Gastrocnemius medialis (tissue), 4 donors: ENCODE measurements at regions of chr4 and their contacts with region 1.

Region 1: DNA sequence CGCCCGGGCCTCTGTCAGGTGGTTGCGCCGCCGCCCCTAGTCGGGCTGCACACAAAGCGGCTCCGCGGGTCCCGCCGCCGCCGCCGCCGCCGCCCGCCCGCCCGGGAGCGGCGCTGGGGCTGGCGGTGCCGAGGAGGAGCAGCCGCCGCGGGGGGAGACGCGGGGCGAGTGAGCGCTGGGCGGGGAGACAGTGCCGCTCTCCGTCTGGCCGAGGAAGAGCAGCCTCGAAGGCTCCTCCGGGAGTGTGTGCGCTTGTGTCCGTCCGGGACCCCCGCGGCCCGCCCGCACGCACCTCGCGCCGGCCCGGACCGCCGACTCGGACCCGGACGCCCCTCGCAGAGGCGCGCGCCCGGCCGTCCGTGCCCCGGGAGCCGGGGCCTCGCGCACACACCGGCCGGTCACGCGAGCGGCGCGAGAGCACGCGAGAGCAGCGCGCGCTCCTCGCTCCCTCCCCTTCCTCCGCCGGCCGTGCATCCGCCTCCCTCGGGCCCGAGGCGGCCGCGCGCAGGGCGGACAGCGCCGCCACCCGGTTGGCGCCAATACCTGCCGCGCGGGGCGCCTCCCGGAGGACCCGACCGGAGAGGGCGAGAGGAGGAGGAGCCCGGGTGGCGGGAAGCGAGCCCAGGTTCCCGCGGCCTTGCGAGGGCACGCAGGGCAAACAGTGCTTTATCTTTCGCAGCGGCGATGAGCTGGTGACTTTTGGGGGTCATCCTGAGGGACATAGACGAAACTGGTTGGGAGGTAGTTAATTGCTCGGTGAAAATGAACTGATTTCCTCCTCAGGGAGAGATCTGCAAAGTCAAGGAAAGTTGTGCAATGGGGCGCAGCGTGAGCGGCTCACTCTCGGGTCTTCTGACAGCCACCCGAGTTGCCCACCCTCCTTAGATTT is at the start of gene PDS5A:
- DNase-seq: peak; percentile 73 to 86
- ATAC-seq: peak; percentile 90 to 91
- H3K4me3 ChIP-seq: peak within 1 kb of the TSS; percentile 74 to 96 (median 94)
- H3K27ac ChIP-seq: peak within 1 kb of the TSS; percentile 95 to 99 (median 98)
- H3K4me1 ChIP-seq: peaks cover 10 to 11% of the 10 kb centered on the region in 2 donors
- H3K27me3 ChIP-seq: no peaks in the 10 kb centered on the region
- CTCF ChIP-seq: peak; percentile 69 to 97 (median 97)
- POLR2A ChIP-seq: peak; percentile 92 to 94
- total RNA-seq, gene PDS5A: 28.3 to 40.6 (median 36.7) TPM

Region 2: DNA sequence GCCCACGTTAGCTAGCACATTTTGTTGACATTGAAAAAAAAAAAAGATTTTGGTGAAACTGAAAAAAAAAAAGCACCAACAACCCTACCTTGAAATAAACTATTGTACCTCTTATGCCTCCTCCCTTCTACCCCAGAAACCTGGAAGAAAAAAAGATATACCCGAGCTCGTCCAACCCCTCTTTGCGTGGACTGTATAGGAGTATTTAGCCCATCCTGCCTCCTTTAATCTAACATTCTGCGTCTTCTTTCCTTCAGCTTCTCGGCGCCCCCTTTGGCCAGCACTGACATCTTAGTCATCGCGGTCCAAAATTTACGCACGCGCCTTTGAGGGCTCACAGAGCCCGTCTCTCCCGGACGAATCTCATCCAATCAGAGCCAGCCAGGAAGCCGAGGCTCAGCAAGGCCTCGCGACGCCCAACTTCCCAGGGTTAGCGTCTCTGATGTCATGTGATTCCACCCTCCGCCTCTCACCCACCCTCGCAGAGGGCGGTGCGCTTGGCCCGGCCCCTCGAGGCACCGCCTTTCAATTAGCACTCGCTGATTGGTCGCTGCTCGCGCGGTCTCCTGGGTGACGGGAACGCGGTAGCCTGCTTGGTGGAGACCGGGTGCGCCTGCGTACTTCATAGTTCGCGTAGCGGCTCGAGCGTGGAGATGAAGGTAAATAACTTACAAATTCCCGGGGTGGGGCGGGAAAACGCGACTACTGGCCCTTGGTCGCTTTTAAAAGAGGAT is 795.7 kb before region 1 on chr4 and contains the start of gene WDR19:
- in situ Hi-C with region 1: no loop called
- intact Hi-C with region 1: loop called (anchors 1 kb)
- DNase-seq: peak; percentile 99
- ATAC-seq: peak; percentile 99 to 100
- H3K4me3 ChIP-seq: peak within 1 kb of the TSS; percentile 70 to 94 (median 74)
- H3K27ac ChIP-seq: peak within 1 kb of the TSS; percentile 81 to 87 (median 83)
- H3K4me1 ChIP-seq: peaks cover 9 to 16% of the 10 kb centered on the region in 2 donors
- H3K27me3 ChIP-seq: no peaks in the 10 kb centered on the region
- CTCF ChIP-seq: peak in 3 of 5 experiments; percentile 12 to 58 (median 45)
- POLR2A ChIP-seq: peak; percentile 45 to 59
- total RNA-seq, gene WDR19: 6.1 to 16.2 (median 9.6) TPM

Region 3: DNA sequence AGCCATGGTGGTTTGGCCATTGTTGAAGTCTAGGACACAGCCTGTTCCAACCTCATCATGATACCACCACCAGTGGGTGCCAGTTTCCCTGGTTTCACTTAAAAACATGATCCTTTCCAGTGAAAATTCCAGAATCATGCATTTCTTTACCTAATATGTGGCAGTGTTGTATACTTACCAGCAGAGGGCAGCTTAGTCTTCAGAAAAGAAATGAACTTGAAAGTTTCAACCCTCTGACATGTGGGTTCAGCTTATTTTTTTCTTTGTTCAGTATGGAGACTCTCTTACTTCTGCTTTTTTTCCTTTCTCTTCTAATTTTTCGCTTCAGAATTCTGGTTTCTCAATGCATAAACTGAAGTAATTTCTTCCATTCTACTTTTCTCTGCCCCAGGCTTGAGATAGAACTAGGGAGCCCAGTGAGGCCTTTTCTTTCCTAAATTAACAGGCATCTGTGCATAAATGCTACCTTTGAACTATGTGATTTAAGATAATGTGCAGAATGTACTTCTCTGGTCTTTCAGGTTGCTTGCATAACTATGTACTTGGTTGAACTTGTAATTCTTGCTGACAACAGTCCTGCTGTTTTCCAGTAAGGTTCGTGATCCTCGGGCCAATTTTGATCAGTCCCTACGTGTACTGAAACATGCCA is 508.2 kb before region 1 on chr4:
- in situ Hi-C with region 1: loop called (anchors 5 to 10 kb)
- intact Hi-C with region 1: loop called (anchors 1 kb)
- DNase-seq: no peak
- ATAC-seq: peak; percentile 85
- H3K4me3 ChIP-seq: no peak overlapping the region
- H3K27ac ChIP-seq: peak overlapping the region in 3 of 4 donors; percentile 32 to 45 (median 35)
- H3K4me1 ChIP-seq: no peaks in the 10 kb centered on the region
- H3K27me3 ChIP-seq: no peaks in the 10 kb centered on the region
- CTCF ChIP-seq: peak; percentile 61 to 76 (median 68)
- POLR2A ChIP-seq: no peak

Region 4: GRCh38 chr4:39527273-39528060 is 450.3 kb before region 1 on chr4 and contains the start of gene UGDH:
- in situ Hi-C with region 1: no loop called
- intact Hi-C with region 1: loop called (anchors 1 kb)
- DNase-seq: peak; percentile 94 to 96
- ATAC-seq: peak; percentile 92 to 94
- H3K4me3 ChIP-seq: peak within 1 kb of the TSS; percentile 84 to 95 (median 91)
- H3K27ac ChIP-seq: peak within 1 kb of the TSS; percentile 91 to 98 (median 95)
- H3K4me1 ChIP-seq: peaks cover 24% of the 10 kb centered on the region in 2 donors
- H3K27me3 ChIP-seq: no peaks in the 10 kb centered on the region
- CTCF ChIP-seq: no peak
- POLR2A ChIP-seq: peak; percentile 88 to 89
- total RNA-seq, gene UGDH: 6.1 to 12.7 (median 8.8) TPM

Region 5: GRCh38 chr4:39883646-39884045 is 94.1 kb before region 1 on chr4:
- in situ Hi-C with region 1: no loop called
- intact Hi-C with region 1: no loop called
- DNase-seq: no peak
- ATAC-seq: no peak
- H3K4me3 ChIP-seq: no peak overlapping the region
- H3K27ac ChIP-seq: no peak overlapping the region
- H3K4me1 ChIP-seq: no peaks in the 10 kb centered on the region
- H3K27me3 ChIP-seq: no peaks in the 10 kb centered on the region
- CTCF ChIP-seq: no peak
- POLR2A ChIP-seq: no peak

Region 6: DNA sequence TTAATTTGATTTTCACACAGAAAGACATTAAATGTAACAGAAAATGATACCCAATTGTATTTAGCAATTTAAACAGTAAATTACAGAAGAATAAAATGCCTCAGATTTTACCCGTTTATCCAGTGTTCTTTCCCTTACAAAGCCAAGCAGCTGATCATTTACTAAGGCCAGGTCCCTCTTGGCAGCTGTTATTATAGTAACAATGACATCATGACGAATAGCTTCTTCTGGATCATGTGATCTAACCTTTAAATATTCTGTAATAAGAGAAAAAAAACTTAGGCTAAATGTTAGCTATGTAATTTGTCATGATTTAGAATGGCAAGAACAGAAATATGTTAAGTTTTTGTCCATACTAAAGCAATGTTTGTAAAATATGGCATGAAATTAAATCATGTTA is 69.4 kb before region 1 on chr4:
- in situ Hi-C with region 1: no loop called
- intact Hi-C with region 1: no loop called
- DNase-seq: no peak
- ATAC-seq: no peak
- H3K4me3 ChIP-seq: no peak overlapping the region
- H3K27ac ChIP-seq: no peak overlapping the region
- H3K4me1 ChIP-seq: no peaks in the 10 kb centered on the region
- H3K27me3 ChIP-seq: no peaks in the 10 kb centered on the region
- CTCF ChIP-seq: no peak
- POLR2A ChIP-seq: no peak